Body of pancreas (tissue), 4 donors: ENCODE measurements at regions of chr4 and their contacts with region 1.

Region 1: DNA sequence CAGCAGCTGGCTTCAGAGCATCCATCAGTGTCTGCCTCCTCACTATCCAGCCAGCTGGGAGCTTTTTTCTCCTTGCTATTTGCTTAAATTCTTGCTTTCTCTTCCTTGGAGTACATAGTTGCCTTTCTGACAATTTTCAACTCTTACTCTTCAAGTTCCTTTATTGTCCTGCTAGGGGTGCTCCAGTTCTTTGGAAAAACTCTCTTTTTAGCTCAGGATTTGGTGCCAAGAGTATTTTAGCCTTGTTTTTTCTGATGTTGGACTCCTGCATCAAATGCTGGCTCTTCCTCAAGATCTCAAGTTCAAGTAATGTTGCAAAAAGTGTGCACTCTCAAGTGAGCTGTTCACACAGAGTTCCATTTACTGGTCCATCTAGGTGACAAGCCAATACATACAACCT is 126.4 kb downstream of the KDR start:
- DNase-seq: no peak
- ATAC-seq: no peak
- H3K4me3 ChIP-seq: no peak overlapping the region
- H3K27ac ChIP-seq: no peak overlapping the region
- H3K4me1 ChIP-seq: no peaks in the 10 kb centered on the region
- H3K27me3 ChIP-seq: no peaks in the 10 kb centered on the region
- CTCF ChIP-seq: peak in 5 of 7 experiments; percentile 15 to 50 (median 42)
- POLR2A ChIP-seq: no peak

Region 2: GRCh38 chr4:55312489-55313101 is 313.6 kb after region 1 on chr4:
- intact Hi-C with region 1: loop called (anchors 10 kb)
- DNase-seq: peak; percentile 41 to 65 (median 56)
- ATAC-seq: peak; percentile 68
- H3K4me3 ChIP-seq: no peak overlapping the region
- H3K27ac ChIP-seq: no peak overlapping the region
- H3K4me1 ChIP-seq: no peaks in the 10 kb centered on the region
- H3K27me3 ChIP-seq: no peaks in the 10 kb centered on the region
- CTCF ChIP-seq: peak; percentile 45 to 75 (median 68)
- POLR2A ChIP-seq: no peak